SK-N-SH (cell line): ENCODE measurements at regions of chr12 and their contacts with region 1.

Region 1: GRCh38 chr12:575948-576612 is 87.2 kb downstream of the NINJ2 start:
- DNase-seq: peak; percentile 96
- H3K4me3 ChIP-seq: peak overlapping the region in 1 of 2 experiments; percentile 25; a peak in 1 of 4 replicates
- H3K27ac ChIP-seq: peak overlapping the region in 1 of 2 experiments; percentile 31; a peak in 2 of 4 replicates
- H3K4me1 ChIP-seq: peaks cover 0 to 27% of the 10 kb centered on the region in 2 experiments; a peak in 2 of 4 replicates
- H3K27me3 ChIP-seq: no peaks in the 10 kb centered on the region
- CTCF ChIP-seq: peak; percentile 95
- EP300 ChIP-seq: peak in 1 of 2 experiments; percentile 13; a peak in 1 of 4 replicates
- RAD21 ChIP-seq: peak; percentile 81

Region 2: GRCh38 chr12:464484-465267 is 111.4 kb before region 1 on chr12:
- CTCF ChIA-PET with region 1: no interaction called
- POLR2A ChIA-PET with region 1: no interaction called
- DNase-seq: no peak
- H3K4me3 ChIP-seq: no peak overlapping the region
- H3K27ac ChIP-seq: no peak overlapping the region
- H3K4me1 ChIP-seq: no peaks in the 10 kb centered on the region; a peak in 1 of 4 replicates
- H3K27me3 ChIP-seq: peaks cover 13% of the 10 kb centered on the region; the same call in 1 of the 2 replicates
- CTCF ChIP-seq: no peak
- EP300 ChIP-seq: no peak
- RAD21 ChIP-seq: no peak

Region 3: DNA sequence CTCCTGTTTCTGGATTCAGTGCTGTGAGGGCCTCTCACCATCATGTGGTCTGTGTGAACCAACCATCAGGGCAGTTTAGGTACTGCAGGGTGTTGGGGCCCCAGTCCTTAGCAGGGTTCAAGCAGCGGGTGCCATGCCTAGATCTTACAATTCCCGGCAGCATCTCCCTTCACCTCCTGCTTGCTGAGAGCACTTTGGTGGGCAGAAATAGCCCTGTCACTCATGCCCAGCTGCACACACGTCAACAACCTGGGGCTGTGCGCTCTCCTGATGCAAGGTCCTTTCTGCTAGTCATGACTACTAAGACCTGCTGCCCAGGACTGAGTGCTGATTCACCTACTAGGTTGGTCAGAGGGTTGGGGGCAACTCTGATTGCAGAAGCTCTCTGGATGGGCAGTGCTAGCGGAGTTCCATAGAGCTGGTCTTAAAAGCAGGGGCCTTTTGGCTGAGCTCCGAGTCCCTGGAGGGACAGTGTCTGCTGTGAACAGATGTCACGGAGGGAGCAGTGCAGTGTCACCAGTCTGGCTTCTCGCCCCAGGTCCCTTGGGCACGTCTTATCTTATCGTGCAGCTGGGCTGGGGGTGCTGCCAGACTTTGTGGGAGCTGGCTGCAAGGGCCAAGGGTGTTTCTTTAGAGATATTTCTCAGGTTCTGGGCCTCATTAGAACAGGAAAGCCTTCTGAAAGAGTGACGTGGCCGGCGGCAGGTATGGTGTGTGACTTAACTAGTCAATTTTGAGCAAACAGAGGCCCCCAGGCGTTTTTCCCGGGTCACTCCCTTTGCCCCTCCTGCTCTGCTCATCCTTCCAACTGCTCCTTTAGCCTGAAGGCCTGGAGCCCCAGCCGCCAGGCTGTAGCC is 15.3 kb after region 1 on chr12:
- CTCF ChIA-PET with region 1: interaction called, 24 read pairs
- POLR2A ChIA-PET with region 1: interaction called, 8 read pairs
- DNase-seq: peak; percentile 89
- H3K4me3 ChIP-seq: no peak overlapping the region; a peak in 1 of 4 replicates
- H3K27ac ChIP-seq: peak overlapping the region in 1 of 2 experiments; percentile 97; a peak in 3 of 4 replicates
- H3K4me1 ChIP-seq: peaks cover 0 to 26% of the 10 kb centered on the region in 2 experiments; a peak in 2 of 4 replicates
- H3K27me3 ChIP-seq: no peaks in the 10 kb centered on the region; the same call in 1 of the 2 replicates
- CTCF ChIP-seq: no peak
- EP300 ChIP-seq: peak in 1 of 2 experiments; percentile 93; a peak in 2 of 4 replicates
- RAD21 ChIP-seq: peak; percentile 39; the same call in 1 of the 2 replicates

Region 4: GRCh38 chr12:737122-737739 is 161.2 kb after region 1 on chr12:
- CTCF ChIA-PET with region 1: interaction called, 12 read pairs
- POLR2A ChIA-PET with region 1: no interaction called
- DNase-seq: no peak
- H3K4me3 ChIP-seq: no peak overlapping the region
- H3K27ac ChIP-seq: no peak overlapping the region
- H3K4me1 ChIP-seq: no peaks in the 10 kb centered on the region
- H3K27me3 ChIP-seq: no peaks in the 10 kb centered on the region
- CTCF ChIP-seq: no peak
- EP300 ChIP-seq: no peak
- RAD21 ChIP-seq: no peak

Region 5: GRCh38 chr12:810671-811415 is 234.8 kb after region 1 on chr12:
- CTCF ChIA-PET with region 1: interaction called, 95 read pairs
- POLR2A ChIA-PET with region 1: no interaction called
- DNase-seq: no peak
- H3K4me3 ChIP-seq: no peak overlapping the region
- H3K27ac ChIP-seq: no peak overlapping the region
- H3K4me1 ChIP-seq: peaks cover 2 to 25% of the 10 kb centered on the region in 2 experiments
- H3K27me3 ChIP-seq: no peaks in the 10 kb centered on the region
- CTCF ChIP-seq: no peak
- EP300 ChIP-seq: no peak
- RAD21 ChIP-seq: no peak